ENCODE measurements at regions of chr22 and their contacts with region 1.

Region 1: GRCh38 chr22:30947816-30948454 is 20.6 kb downstream of the MORC2 start:
- DNase-seq: no peak
- H3K4me3 ChIP-seq: peak overlapping the region in 1 of 2 donors; percentile 10
- H3K27ac ChIP-seq: peak overlapping the region; percentile 88 to 96
- H3K4me1 ChIP-seq: peaks cover 21 to 85% of the 10 kb centered on the region in 2 donors
- H3K27me3 ChIP-seq: no peaks in the 10 kb centered on the region
- CTCF ChIP-seq: peak; percentile 49 to 64 (median 59)

Region 2: GRCh38 chr22:30968924-30969539 is 21.1 kb after region 1 on chr22 and contains the start of gene TUG1:
- intact Hi-C with region 1: loop called (anchors 1 kb)
- DNase-seq: peak; percentile 97 to 99
- H3K4me3 ChIP-seq: peak within 1 kb of the TSS; percentile 84 to 96
- H3K27ac ChIP-seq: peak within 1 kb of the TSS; percentile 96
- H3K4me1 ChIP-seq: peaks cover 4 to 16% of the 10 kb centered on the region in 2 donors
- H3K27me3 ChIP-seq: no peaks in the 10 kb centered on the region
- CTCF ChIP-seq: no peak
- total RNA-seq, gene TUG1: 46.2 TPM

Region 3: GRCh38 chr22:31055635-31056159 is 107.8 kb after region 1 on chr22:
- intact Hi-C with region 1: loop called (anchors 1 kb)
- DNase-seq: peak; percentile 76 to 97
- H3K4me3 ChIP-seq: no peak overlapping the region
- H3K27ac ChIP-seq: peak overlapping the region; percentile 89 to 91
- H3K4me1 ChIP-seq: peaks cover 6 to 32% of the 10 kb centered on the region in 2 donors
- H3K27me3 ChIP-seq: no peaks in the 10 kb centered on the region
- CTCF ChIP-seq: no peak

Region 4: DNA sequence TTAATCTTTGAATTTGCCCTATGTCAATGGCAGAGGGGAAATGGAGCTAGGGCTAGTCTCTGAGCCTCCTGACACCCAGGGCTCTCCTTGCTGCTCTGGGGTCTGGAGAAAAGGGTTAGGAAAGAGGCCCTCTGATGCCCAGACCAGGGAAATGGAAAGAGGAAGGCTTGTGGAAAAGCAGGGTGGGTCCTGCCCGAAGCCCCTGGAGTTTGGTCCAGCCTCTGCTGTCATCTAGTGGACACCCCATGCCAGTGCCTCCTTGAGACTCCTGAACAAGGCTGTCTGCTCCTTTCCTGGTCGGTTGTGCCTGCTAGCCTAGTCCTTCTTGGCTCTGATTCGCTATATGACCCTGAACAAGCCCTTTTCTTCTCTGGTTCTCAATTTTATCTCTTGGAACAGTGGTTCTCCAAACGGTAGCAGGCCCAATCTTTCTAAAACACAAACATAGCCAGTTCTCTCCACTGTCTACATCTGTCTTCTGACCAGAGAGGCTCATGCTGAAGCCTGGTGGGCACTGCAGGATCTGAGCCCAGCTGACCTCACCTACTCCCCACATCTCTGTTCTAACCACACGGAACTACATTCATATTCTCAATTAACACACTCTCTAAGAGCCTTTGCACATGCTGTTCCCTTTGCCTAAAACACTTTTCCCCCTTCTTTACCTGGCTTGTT is 201.2 kb after region 1 on chr22:
- intact Hi-C with region 1: loop called (anchors 2 kb)
- DNase-seq: peak in 1 of 2 donors; percentile 87
- H3K4me3 ChIP-seq: no peak overlapping the region
- H3K27ac ChIP-seq: peak overlapping the region; percentile 71 to 81
- H3K4me1 ChIP-seq: peaks cover 5 to 13% of the 10 kb centered on the region in 2 donors
- H3K27me3 ChIP-seq: no peaks in the 10 kb centered on the region
- CTCF ChIP-seq: peak; percentile 90 to 93 (median 90)